ENCODE measurements at regions of chr9 and their contacts with region 1.

Region 1: GRCh38 chr9:132800038-132800648 is 77.9 kb downstream of the AK8 start:
- DNase-seq: peak; percentile 92

Region 2: GRCh38 chr9:132507746-132508469 is 292.2 kb before region 1 on chr9:
- intact Hi-C with region 1: loop called in 1 of 2 experiments (anchors 5 kb)
- DNase-seq: peak; percentile 88

Region 3: DNA sequence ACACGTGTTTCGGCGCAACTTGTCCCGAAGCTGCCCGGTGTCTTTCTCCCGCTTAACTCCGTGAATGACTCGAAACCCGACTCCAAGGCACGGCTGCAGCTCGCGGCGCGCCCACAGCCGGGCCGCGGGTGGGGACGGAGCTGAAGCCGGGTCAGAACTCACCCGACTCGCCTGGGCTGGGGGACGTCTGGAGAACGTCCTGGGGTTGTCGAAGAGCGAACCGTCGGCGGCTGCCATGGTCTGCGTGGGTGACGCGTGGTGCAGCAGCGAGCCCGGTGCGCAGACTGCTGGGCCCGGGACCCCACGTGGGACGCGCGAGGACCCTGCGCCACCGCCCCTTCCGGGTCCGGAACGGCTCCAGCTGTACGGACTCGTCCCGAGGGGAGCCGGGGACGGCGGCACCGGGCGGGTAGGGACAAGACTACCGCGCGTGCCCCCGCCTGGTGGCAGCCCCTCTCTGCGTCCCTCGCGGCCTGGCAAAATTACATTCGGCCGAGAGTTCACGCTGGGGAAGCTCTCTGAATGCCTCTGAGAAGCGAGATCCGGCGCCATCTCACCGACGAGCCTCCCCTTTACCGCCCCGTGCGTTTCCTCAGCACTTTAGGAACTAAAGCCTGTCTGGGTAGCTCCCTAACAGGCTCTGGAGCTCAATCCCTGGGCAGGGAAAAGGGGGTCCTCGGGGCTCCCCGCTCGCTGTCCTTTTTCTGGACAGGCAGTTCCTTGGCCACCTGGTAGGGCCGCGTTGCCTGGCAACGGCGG is 130.3 kb before region 1 on chr9 and contains the start of gene DDX31:
- intact Hi-C with region 1: loop called in 1 of 2 experiments (anchors 10 kb)
- DNase-seq: peak; percentile 96
- total RNA-seq, gene DDX31: 6.8 to 6.9 TPM